ENCODE measurements at regions of chr1 and their contacts with region 1.

Region 1: DNA sequence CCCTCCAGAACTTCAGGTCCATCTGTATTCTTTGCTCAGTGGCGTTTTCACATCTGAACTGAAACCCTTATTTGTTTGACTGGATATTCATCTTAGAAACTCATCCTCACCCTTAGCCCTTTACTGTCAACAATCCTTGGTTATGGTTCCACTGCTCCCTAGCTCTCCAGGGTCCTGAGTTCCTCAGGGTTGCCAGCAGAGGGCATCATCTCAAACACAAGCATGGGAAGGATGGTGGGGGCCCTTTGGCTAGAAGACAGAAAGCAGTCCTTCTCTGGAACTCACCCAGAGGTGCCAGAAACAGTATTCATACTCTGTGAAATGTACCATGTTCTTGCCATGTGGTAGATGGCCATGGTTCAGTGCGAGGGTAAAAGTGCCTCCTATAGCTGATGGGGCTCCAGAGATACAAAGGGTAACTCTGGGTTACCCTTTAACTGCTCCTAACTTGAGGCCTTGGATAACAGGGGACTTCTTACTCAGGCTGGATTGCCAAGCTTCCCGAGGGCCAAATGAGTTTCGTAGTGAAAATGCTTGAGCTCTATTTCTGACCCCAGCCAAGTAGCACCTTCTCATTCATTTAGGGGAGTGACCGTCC is 11.3 kb downstream of the NCSTN start:
- DNase-seq: peak; percentile 36
- ATAC-seq: peak; percentile 43
- H3K4me3 ChIP-seq: no peak overlapping the region
- H3K4me3 Mint-ChIP-seq: no peak overlapping the region
- H3K27ac ChIP-seq: no peak overlapping the region
- H3K27ac Mint-ChIP-seq: no peak overlapping the region
- H3K4me1 ChIP-seq: no peaks in the 10 kb centered on the region
- H3K4me1 Mint-ChIP-seq: no peaks in the 10 kb centered on the region
- H3K27me3 ChIP-seq: no peaks in the 10 kb centered on the region
- H3K27me3 Mint-ChIP-seq: no peaks in the 10 kb centered on the region
- CTCF ChIP-seq: peak; percentile 48

Region 2: GRCh38 chr1:160307118-160307854 is 47.2 kb before region 1 on chr1:
- CTCF ChIA-PET with region 1: no interaction called
- POLR2A ChIA-PET with region 1: no interaction called
- intact Hi-C with region 1: no loop called
- DNase-seq: peak; percentile 68
- ATAC-seq: peak; percentile 94
- H3K4me3 ChIP-seq: peak overlapping the region in 1 of 5 experiments; percentile 24
- H3K4me3 Mint-ChIP-seq: peak overlapping the region; percentile 41
- H3K27ac ChIP-seq: peak overlapping the region; percentile 39 to 72
- H3K27ac Mint-ChIP-seq: peak overlapping the region; percentile 91
- H3K4me1 ChIP-seq: peaks cover 7 to 22% of the 10 kb centered on the region in 2 donors
- H3K4me1 Mint-ChIP-seq: peaks cover 35% of the 10 kb centered on the region
- H3K27me3 ChIP-seq: no peaks in the 10 kb centered on the region
- H3K27me3 Mint-ChIP-seq: no peaks in the 10 kb centered on the region
- CTCF ChIP-seq: no peak

Region 3: DNA sequence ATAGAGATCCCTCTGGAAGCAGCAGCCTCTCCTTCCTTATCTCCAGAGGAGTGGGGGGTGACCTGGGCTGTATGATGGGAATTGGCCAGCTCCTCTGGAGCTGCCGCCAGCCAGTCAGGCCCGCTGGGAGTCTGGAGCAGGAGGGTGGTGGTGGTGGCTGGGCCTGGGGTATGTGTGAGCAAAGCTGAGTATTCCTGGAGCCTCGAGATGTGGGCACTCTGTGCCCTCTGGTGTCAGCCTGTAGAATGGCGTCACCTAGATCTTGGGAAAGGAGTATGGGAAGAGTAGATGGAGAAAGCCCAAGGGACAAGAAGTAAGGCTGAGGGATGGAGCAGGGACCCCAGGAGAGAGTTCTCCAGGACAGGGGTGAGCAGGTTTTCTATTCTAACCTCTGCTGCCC is 61.9 kb after region 1 on chr1:
- CTCF ChIA-PET with region 1: interaction called, 19 read pairs
- POLR2A ChIA-PET with region 1: no interaction called
- intact Hi-C with region 1: no loop called
- DNase-seq: no peak
- ATAC-seq: no peak
- H3K4me3 ChIP-seq: no peak overlapping the region
- H3K4me3 Mint-ChIP-seq: no peak overlapping the region
- H3K27ac ChIP-seq: no peak overlapping the region
- H3K27ac Mint-ChIP-seq: no peak overlapping the region
- H3K4me1 ChIP-seq: no peaks in the 10 kb centered on the region
- H3K4me1 Mint-ChIP-seq: no peaks in the 10 kb centered on the region
- H3K27me3 ChIP-seq: no peaks in the 10 kb centered on the region
- H3K27me3 Mint-ChIP-seq: no peaks in the 10 kb centered on the region
- CTCF ChIP-seq: no peak

Region 4: DNA sequence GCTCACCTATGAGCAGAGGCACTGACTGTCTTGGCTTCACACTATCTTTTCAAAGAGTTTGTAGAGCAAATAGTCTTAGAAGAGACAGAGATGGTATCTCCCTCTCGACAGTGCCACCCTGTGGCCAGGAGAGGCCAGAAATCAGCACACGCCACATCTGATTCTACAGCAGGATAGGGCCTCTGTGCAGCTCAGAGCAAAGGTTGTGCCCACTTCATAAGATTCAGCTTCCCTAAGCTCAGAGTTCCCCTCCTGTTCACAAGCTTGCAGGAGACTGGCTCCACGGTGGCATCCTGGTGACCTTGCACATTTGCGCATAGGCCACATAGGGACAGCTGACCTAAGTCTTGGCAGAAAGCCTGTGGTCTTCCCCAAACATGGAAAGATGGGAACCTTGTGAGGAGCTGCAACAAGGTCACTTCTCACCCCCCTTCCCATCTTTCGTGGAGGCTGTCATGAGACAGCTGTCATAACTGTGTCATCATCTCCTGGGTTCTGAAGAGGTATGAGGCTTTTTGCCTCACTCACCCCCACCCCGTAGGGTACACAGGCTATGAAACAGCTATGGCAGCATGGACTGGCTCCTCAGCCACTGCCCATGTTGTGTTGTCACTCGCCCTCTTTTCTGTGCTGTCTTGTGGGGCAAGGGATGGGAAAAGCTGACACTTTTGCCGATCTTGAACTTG is 597.1 kb after region 1 on chr1:
- CTCF ChIA-PET with region 1: no interaction called
- POLR2A ChIA-PET with region 1: no interaction called
- intact Hi-C with region 1: no loop called
- DNase-seq: peak; percentile 81
- ATAC-seq: peak; percentile 81
- H3K4me3 ChIP-seq: no peak overlapping the region
- H3K4me3 Mint-ChIP-seq: no peak overlapping the region
- H3K27ac ChIP-seq: no peak overlapping the region
- H3K27ac Mint-ChIP-seq: no peak overlapping the region
- H3K4me1 ChIP-seq: peaks cover 0 to 4% of the 10 kb centered on the region in 2 donors
- H3K4me1 Mint-ChIP-seq: peaks cover 9% of the 10 kb centered on the region
- H3K27me3 ChIP-seq: no peaks in the 10 kb centered on the region
- H3K27me3 Mint-ChIP-seq: no peaks in the 10 kb centered on the region
- CTCF ChIP-seq: peak; percentile 85

Measured in B cell (primary cell).